Dendritic cell treated with granulocyte-macrophage colony-stimulating factor and Interleukin-4, amounts not matched to agents 40 ng/mL and 50 ng/mL, for 4 days (primary cell): ENCODE measurements at regions of chr4 and their contacts with region 1.

Region 1: GRCh38 chr4:80072744-80073472 is at the start of gene ANTXR2:
- H3K4me3 Mint-ChIP-seq: peak within 1 kb of the TSS; percentile 96
- H3K27ac Mint-ChIP-seq: peak within 1 kb of the TSS; percentile 94
- H3K4me1 Mint-ChIP-seq: peaks cover 51% of the 10 kb centered on the region
- H3K27me3 Mint-ChIP-seq: no peaks in the 10 kb centered on the region

Region 2: DNA sequence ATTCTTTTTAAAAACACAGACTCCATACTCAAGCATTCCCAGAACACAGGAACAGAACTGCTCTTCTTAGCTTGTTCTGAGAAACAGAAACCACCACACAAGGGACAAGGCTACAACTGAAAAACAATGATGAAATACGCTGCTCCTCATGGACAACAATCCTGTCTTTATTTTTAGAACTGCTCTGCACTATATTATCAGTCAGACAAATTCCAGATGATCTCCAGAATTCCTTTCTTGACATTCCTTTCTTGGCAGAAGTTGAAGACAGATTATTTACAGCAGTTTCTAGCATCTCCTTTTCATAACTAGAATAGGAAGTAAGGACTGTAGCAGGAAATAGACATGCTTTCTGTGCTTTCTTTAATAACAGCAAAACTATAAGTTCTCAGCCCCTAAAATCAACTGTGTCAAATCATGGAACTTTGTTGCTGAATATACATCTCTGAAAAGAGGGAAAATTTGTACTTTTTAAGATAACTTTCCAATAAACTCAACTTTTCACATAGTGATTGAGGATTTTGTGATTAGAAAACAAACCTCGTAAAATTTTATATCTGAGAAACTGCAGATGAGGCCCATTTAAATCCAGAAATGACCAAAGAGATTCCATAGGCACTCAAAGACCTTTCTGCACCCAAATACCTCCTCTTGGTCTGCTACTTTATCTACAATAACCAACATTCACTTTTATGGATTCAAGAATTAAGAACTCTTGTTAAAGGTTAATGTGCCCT is 35.8 kb before region 1 on chr4:
- intact Hi-C with region 1: no loop called
- H3K4me3 Mint-ChIP-seq: peak overlapping the region; percentile 17
- H3K27ac Mint-ChIP-seq: peak overlapping the region; percentile 68
- H3K4me1 Mint-ChIP-seq: peaks cover 11% of the 10 kb centered on the region
- H3K27me3 Mint-ChIP-seq: no peaks in the 10 kb centered on the region

Region 3: GRCh38 chr4:80058740-80059139 is 14.2 kb before region 1 on chr4:
- intact Hi-C with region 1: loop called (anchors 2 kb)
- H3K4me3 Mint-ChIP-seq: peak overlapping the region; percentile 30
- H3K27ac Mint-ChIP-seq: peak overlapping the region; percentile 86
- H3K4me1 Mint-ChIP-seq: peaks cover 24% of the 10 kb centered on the region
- H3K27me3 Mint-ChIP-seq: no peaks in the 10 kb centered on the region

Region 4: GRCh38 chr4:80142394-80143306 is 69.7 kb after region 1 on chr4:
- intact Hi-C with region 1: loop called (anchors 5 kb)
- H3K4me3 Mint-ChIP-seq: no peak overlapping the region
- H3K27ac Mint-ChIP-seq: no peak overlapping the region
- H3K4me1 Mint-ChIP-seq: peaks cover 54% of the 10 kb centered on the region
- H3K27me3 Mint-ChIP-seq: no peaks in the 10 kb centered on the region

Region 5: DNA sequence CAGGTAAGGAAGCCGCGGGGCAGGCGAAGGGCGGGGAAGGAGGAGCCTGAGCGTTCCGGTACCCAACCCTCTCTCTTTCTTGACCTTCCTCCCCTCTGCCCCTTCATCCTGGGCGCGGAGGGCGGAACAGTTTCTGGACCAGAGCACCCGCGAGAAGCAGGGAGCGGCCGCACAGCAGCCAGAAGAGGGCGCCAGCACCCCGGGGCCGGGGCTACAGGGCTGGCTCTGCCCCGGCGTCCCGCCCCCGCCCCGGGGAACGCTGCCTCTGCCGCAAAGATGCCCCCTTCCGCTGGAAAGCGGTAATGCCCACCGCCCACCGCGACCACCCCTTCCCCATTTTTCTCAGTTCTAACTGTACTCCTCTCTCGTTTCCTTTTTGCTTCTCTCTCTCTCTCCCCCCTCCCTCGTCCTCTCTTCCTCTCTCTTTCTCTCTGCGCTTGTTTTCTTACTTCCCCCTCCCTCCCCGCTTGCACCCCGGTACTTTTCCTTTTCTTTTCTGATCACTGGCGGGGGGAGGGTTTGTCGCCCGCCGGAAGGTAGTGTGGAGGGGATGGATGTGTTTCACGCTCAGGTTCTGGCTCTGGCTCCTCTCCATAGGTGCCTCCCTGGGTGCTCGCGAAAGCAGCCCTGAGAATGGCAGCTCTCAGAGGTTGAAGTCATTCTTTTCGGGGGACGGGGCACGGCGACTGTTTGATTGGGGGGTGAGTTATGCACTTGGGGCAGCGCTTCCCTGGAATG is 111.3 kb after region 1 on chr4:
- intact Hi-C with region 1: loop called (anchors 5 kb)
- H3K4me3 Mint-ChIP-seq: peak overlapping the region; percentile 97
- H3K27ac Mint-ChIP-seq: peak overlapping the region; percentile 85
- H3K4me1 Mint-ChIP-seq: peaks cover 29% of the 10 kb centered on the region
- H3K27me3 Mint-ChIP-seq: peaks cover 57% of the 10 kb centered on the region

Region 6: DNA sequence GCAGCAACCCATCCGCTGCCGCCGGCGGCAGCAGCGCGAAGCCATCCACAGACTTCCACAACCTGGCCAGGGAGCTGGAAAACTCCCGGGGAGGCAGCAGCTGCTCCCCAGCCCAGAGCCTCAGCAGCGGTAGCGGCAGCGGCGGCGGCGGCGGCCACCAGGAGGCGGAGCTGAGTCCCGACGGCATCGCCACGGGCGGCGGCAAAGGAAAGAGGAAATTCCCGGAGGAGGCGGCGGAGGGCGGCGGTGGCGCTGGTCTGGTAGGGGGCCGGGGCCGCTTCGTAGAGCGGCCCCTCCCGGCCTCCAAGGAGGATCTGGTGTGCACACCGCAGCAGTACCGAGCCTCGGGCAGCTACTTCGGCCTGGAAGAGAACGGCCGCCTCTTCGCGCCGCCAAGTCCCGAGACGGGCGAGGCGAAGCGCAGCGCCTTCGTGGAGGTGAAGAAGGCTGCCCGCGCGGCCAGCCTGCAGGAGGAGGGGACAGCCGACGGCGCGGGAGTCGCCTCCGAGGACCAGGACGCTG is 129.3 kb after region 1 on chr4:
- intact Hi-C with region 1: loop called (anchors 5 kb)
- H3K4me3 Mint-ChIP-seq: peak overlapping the region; percentile 79
- H3K27ac Mint-ChIP-seq: peak overlapping the region; percentile 82
- H3K4me1 Mint-ChIP-seq: peaks cover 31% of the 10 kb centered on the region
- H3K27me3 Mint-ChIP-seq: peaks cover 66% of the 10 kb centered on the region